ENCODE measurements at regions of chrX and their contacts with region 1.

Region 1: DNA sequence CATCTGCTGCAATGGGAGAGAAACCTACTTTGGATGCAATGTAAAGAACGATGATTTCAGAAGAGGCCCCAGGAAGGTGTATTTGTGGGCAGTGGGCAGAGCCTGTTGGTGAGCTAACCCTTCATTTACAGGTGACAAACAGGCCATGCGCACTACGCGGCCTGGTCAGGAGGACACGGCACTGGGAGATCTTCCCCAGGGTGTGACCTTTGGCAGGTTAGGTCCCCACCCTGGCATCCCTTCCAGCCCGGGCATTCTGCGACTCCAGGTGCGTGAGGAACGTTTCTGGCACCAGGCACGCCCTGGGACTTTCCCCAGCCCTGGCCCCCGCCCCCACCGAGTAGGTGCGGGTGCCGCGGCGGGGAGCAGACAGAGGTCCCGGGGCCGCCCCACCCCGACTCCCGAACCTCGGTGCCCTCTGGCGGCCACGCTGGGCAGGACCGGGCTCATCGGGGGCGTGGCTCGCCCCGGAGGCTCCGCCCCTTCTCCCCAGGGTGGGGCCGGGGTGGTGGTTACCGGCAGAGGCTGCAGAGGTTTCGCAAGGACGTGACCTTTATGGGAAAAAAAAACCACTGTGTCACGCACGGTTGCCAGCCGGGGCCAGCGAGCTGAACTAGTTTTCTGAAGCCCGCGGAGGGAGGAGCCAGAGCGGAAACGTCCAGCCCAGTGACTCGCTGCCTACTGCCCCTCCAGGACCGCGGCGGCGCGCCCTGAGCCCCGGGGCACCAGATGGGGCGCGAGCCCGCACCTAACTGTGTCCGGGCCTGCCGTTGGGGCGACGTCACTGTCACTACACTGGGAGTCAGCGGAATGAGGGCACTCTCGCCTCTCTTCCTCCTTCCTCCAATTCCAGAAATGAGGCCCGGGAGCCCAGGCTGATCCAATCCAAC is 5.0 kb upstream of the NYX start:
- DNase-seq: peak; percentile 87
- H3K4me3 Mint-ChIP-seq: peak overlapping the region; percentile 73
- H3K27ac Mint-ChIP-seq: peak overlapping the region; percentile 85
- H3K4me1 Mint-ChIP-seq: peaks cover 18% of the 10 kb centered on the region
- H3K27me3 Mint-ChIP-seq: no peaks in the 10 kb centered on the region

Region 2: GRCh38 chrX:40735325-40736169 is 706.6 kb before region 1 on chrX and contains the start of gene MED14:
- intact Hi-C with region 1: no loop called
- DNase-seq: peak; percentile 82
- H3K4me3 Mint-ChIP-seq: peak within 1 kb of the TSS; percentile 87
- H3K27ac Mint-ChIP-seq: peak within 1 kb of the TSS; percentile 90
- H3K4me1 Mint-ChIP-seq: peaks cover 30% of the 10 kb centered on the region
- H3K27me3 Mint-ChIP-seq: no peaks in the 10 kb centered on the region
- total RNA-seq, gene MED14: 36.4 and 40.9 TPM in 2 replicates

Region 3: DNA sequence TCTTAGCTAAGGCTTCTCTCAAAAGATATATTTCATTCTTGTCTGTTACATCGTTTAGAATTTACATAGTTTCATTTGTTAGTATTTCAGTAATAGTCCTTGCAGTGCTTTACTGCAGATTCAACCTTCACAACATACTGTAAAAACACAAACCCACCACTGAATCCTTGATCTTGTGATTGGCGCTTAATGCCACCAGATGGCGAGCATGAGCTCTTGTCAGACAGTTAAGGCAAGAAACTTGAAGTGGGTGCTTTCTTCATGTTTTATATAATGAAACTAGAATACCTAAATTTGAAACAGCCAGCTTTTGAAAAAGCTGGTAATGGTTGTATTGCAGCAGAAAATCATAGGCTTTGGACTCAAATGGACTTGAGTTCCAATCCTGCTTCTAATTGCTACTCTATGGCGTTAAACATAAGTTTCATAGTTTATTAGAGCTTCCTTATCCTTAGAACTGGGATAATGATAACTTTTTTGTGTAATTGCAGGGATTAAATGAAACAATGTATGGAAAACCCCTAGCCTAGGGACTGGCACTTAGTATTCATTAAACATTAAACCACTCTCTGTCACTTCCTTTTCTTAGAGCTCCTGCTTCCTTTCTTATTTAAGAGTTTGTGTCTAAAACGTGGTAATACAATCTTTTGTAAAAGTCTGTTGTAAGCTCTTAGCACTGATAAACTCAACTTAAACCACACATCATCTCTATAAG is 261.8 kb before region 1 on chrX:
- intact Hi-C with region 1: loop called (anchors 10 kb)
- DNase-seq: peak; percentile 11
- H3K4me3 Mint-ChIP-seq: peak overlapping the region; percentile 11
- H3K27ac Mint-ChIP-seq: peak overlapping the region; percentile 73
- H3K4me1 Mint-ChIP-seq: peaks cover 51% of the 10 kb centered on the region
- H3K27me3 Mint-ChIP-seq: no peaks in the 10 kb centered on the region

Region 4: GRCh38 chrX:41350976-41351569 is 91.1 kb before region 1 on chrX:
- intact Hi-C with region 1: loop called (anchors 2 kb)
- DNase-seq: no peak
- H3K4me3 Mint-ChIP-seq: no peak overlapping the region
- H3K27ac Mint-ChIP-seq: peak overlapping the region; percentile 53
- H3K4me1 Mint-ChIP-seq: peaks cover 36% of the 10 kb centered on the region
- H3K27me3 Mint-ChIP-seq: no peaks in the 10 kb centered on the region

Region 5: DNA sequence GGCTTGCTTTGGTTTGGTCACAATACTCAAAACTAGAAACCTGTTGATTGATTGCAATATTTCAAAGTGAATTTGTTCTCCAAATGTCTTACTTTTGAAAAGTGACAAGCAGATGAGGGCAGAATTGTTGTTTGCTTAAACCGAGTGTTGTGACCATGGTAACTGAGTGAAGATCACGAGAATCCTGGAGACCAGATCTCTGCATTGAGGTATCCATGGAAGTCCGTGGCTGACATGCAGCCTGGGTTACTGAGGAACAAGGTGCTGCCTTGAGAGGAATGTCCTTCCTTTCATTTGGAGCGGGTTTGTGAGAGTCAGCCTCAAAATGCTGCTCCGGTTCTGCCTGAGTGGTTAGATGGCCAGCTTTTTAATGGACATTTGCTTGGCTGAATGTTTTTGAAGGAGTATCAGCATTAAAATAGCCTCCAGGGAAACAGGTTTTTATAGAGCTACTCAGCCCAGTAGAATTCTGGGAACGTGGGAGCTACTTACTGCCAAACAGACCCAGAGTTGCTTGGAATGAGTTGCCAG is 36.3 kb after region 1 on chrX:
- intact Hi-C with region 1: loop called (anchors 2 kb)
- DNase-seq: no peak
- H3K4me3 Mint-ChIP-seq: no peak overlapping the region
- H3K27ac Mint-ChIP-seq: no peak overlapping the region
- H3K4me1 Mint-ChIP-seq: peaks cover 3% of the 10 kb centered on the region
- H3K27me3 Mint-ChIP-seq: no peaks in the 10 kb centered on the region

Region 6: GRCh38 chrX:41561045-41561444 is 118.9 kb after region 1 on chrX:
- intact Hi-C with region 1: loop called (anchors 1 kb)
- DNase-seq: peak; percentile 25
- H3K4me3 Mint-ChIP-seq: peak overlapping the region; percentile 56
- H3K27ac Mint-ChIP-seq: peak overlapping the region; percentile 80
- H3K4me1 Mint-ChIP-seq: peaks cover 57% of the 10 kb centered on the region
- H3K27me3 Mint-ChIP-seq: no peaks in the 10 kb centered on the region